ENCODE measurements at regions of chr7 and their contacts with region 1.

Region 1: GRCh38 chr7:38929460-38930171 is 20.6 kb upstream of the VPS41 start:
- DNase-seq: peak in 2 of 4 donors; percentile 18 to 25
- ATAC-seq: peak; percentile 91
- H3K4me3 ChIP-seq: no peak overlapping the region
- H3K27ac ChIP-seq: peak overlapping the region; percentile 25 to 68 (median 50)
- H3K4me1 ChIP-seq: peaks cover 10% of the 10 kb centered on the region
- H3K27me3 ChIP-seq: no peaks in the 10 kb centered on the region
- CTCF ChIP-seq: no peak
- POLR2A ChIP-seq: no peak

Region 2: GRCh38 chr7:38796626-38797501 is 132.8 kb before region 1 on chr7:
- intact Hi-C with region 1: loop called (anchors 10 kb)
- DNase-seq: peak; percentile 57 to 72 (median 67)
- ATAC-seq: peak; percentile 55
- H3K4me3 ChIP-seq: no peak overlapping the region
- H3K27ac ChIP-seq: no peak overlapping the region
- H3K4me1 ChIP-seq: no peaks in the 10 kb centered on the region
- H3K27me3 ChIP-seq: no peaks in the 10 kb centered on the region
- CTCF ChIP-seq: peak; percentile 49 to 88 (median 78)
- POLR2A ChIP-seq: no peak

Region 3: GRCh38 chr7:38858259-38859165 is 71.1 kb before region 1 on chr7:
- intact Hi-C with region 1: no loop called
- DNase-seq: no peak
- ATAC-seq: no peak
- H3K4me3 ChIP-seq: no peak overlapping the region
- H3K27ac ChIP-seq: no peak overlapping the region
- H3K4me1 ChIP-seq: peaks cover 5% of the 10 kb centered on the region
- H3K27me3 ChIP-seq: no peaks in the 10 kb centered on the region
- CTCF ChIP-seq: no peak
- POLR2A ChIP-seq: no peak

Region 4: GRCh38 chr7:39465055-39465929 is 535.7 kb after region 1 on chr7:
- intact Hi-C with region 1: loop called (anchors 10 kb)
- DNase-seq: peak; percentile 53 to 67 (median 64)
- ATAC-seq: peak; percentile 87
- H3K4me3 ChIP-seq: no peak overlapping the region
- H3K27ac ChIP-seq: no peak overlapping the region
- H3K4me1 ChIP-seq: no peaks in the 10 kb centered on the region
- H3K27me3 ChIP-seq: no peaks in the 10 kb centered on the region
- CTCF ChIP-seq: peak; percentile 40 to 94 (median 79)
- POLR2A ChIP-seq: no peak